Endothelial cell of umbilical vein (primary cell): ENCODE measurements at regions of chr1 and their contacts with region 1.

Region 1: DNA sequence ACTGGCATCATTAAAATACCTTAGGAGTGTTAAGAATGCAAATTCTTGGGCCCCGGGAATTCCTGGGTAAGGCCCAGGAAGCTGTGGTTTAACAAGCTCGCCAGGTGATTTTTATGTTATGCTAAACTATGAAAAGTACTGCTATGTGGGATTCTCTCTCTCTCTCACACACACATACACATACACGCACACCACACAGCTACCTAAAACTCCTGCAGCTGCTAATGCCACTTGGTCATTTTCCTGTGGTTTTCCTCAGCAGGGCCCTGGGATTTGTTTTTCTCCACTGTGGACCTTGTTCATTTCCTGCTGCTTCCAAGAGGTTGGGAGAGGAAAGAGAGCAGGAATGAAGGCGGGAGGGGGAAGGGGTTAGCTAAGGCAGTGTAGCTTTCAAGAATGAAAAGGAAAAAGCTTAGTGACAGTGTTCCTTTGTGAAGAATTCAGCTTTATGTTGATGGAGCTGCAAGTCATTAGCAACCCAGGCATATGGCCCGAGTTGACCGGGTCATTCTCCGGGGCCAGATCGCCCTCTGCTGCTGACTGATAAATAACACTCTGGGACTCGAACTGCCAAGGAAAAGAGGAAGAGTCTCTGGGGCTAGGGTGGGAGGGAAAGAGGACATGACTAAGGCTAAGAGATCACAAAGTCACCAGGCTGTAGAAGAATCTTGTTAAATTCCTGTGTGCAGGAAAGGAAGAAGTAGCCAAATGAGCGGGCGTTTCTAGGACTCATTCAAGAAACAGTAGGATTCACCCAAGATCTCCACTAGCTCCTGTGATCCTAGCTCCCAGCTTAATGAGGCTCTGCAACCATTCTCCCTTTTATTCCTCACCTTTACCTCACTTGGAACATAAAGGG is 30.5 kb upstream of the LRIG2 start:
- DNase-seq: peak; percentile 96
- H3K4me3 ChIP-seq: peak overlapping the region in 1 of 3 experiments; percentile 29
- H3K27ac ChIP-seq: peak overlapping the region; percentile 84
- H3K4me1 ChIP-seq: peaks cover 40% of the 10 kb centered on the region
- H3K27me3 ChIP-seq: no peaks in the 10 kb centered on the region
- CTCF ChIP-seq: peak; percentile 50 to 56
- POLR2A ChIP-seq: no peak

Region 2: GRCh38 chr1:112809253-112809684 is 233.2 kb before region 1 on chr1:
- CTCF ChIA-PET with region 1: interaction called, 23 read pairs
- POLR2A ChIA-PET with region 1: no interaction called
- dilution Hi-C with region 1: no loop called
- intact Hi-C with region 1: loop called (anchors 1 kb)
- DNase-seq: peak; percentile 80
- H3K4me3 ChIP-seq: no peak overlapping the region
- H3K27ac ChIP-seq: no peak overlapping the region
- H3K4me1 ChIP-seq: peaks cover 3% of the 10 kb centered on the region
- H3K27me3 ChIP-seq: no peaks in the 10 kb centered on the region
- CTCF ChIP-seq: peak; percentile 94 to 96
- POLR2A ChIP-seq: no peak

Region 3: DNA sequence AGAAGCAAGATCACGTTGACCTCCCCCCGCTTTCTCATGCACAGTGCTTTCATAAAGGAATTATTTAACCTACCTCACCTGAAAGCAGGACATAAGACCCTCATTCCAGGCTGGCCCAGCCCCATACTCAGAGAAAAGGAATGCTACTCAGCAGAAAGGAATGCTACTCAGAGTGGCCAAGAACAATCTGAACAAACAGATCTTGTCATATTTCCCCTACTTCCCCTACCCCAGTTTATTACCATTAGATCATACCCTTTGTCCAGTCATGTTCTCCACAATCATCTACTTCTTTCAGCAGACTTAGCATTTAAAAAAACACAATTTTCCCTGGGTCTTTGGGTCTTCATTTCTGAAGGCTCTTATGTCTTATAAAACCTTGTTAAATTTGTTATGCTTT is 176.4 kb before region 1 on chr1:
- CTCF ChIA-PET with region 1: interaction called, 3 read pairs
- POLR2A ChIA-PET with region 1: no interaction called
- dilution Hi-C with region 1: no loop called
- intact Hi-C with region 1: loop called (anchors 1 kb)
- DNase-seq: peak; percentile 94
- H3K4me3 ChIP-seq: no peak overlapping the region
- H3K27ac ChIP-seq: peak overlapping the region; percentile 97
- H3K4me1 ChIP-seq: peaks cover 43% of the 10 kb centered on the region
- H3K27me3 ChIP-seq: no peaks in the 10 kb centered on the region
- CTCF ChIP-seq: no peak
- POLR2A ChIP-seq: peak; percentile 76

Region 4: GRCh38 chr1:112905395-112906149 is 136.9 kb before region 1 on chr1:
- CTCF ChIA-PET with region 1: interaction called, 15 read pairs
- POLR2A ChIA-PET with region 1: interaction called, 3 read pairs
- dilution Hi-C with region 1: no loop called
- intact Hi-C with region 1: no loop called
- DNase-seq: peak; percentile 76
- H3K4me3 ChIP-seq: no peak overlapping the region
- H3K27ac ChIP-seq: no peak overlapping the region
- H3K4me1 ChIP-seq: peaks cover 26% of the 10 kb centered on the region
- H3K27me3 ChIP-seq: no peaks in the 10 kb centered on the region
- CTCF ChIP-seq: no peak
- POLR2A ChIP-seq: no peak

Region 5: GRCh38 chr1:113031171-113031933 is 11.2 kb before region 1 on chr1:
- CTCF ChIA-PET with region 1: interaction called, 9 read pairs
- POLR2A ChIA-PET with region 1: interaction called, 6 read pairs
- dilution Hi-C with region 1: no loop called
- intact Hi-C with region 1: loop called (anchors 1 kb)
- DNase-seq: peak; percentile 78
- H3K4me3 ChIP-seq: no peak overlapping the region
- H3K27ac ChIP-seq: peak overlapping the region; percentile 6
- H3K4me1 ChIP-seq: peaks cover 10% of the 10 kb centered on the region
- H3K27me3 ChIP-seq: no peaks in the 10 kb centered on the region
- CTCF ChIP-seq: no peak
- POLR2A ChIP-seq: no peak

Region 6: DNA sequence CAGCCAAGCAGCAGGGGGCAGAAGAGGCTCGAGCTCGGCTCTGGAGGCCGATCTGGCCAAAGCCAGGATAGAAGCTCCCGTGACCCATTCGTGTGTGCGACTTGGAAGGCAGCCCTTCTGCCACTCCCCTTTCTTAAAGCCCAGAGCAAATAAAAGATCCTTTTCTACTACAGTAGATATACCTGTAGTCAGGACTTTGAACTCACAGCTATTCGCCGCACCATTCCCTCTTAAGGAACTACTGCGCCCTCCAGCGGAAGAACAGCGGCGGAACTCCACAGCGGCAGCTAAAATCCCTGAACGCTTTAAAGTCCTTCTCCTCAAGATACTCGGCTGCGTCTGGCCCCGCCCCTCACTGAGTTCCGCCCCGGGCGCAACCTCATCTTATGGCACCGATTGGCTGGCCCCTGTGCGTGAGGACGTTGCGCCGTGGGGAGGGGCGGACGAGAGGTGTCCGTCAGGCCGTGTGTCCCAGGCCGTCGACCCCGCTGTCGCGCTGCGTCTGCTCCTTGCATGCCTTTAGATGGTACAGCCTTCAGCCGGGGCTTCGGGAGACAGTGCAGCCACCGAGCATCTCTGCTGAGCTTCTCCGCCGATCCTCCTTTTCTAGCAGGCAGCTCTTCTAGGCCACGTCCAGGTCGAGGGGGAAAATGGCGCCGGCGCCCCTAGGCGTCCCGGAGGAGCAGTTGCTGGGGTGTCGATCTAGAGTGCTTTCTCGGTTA is 30.4 kb after region 1 on chr1 and contains the start of gene LRIG2:
- CTCF ChIA-PET with region 1: interaction called, 87 read pairs
- POLR2A ChIA-PET with region 1: interaction called, 11 read pairs
- dilution Hi-C with region 1: no loop called
- intact Hi-C with region 1: loop called (anchors 1 kb)
- DNase-seq: peak; percentile 98
- H3K4me3 ChIP-seq: peak within 1 kb of the TSS; percentile 59 to 96 (median 69)
- H3K27ac ChIP-seq: peak within 1 kb of the TSS; percentile 71
- H3K4me1 ChIP-seq: peaks cover 11% of the 10 kb centered on the region
- H3K27me3 ChIP-seq: no peaks in the 10 kb centered on the region
- CTCF ChIP-seq: peak; percentile 73 to 86
- POLR2A ChIP-seq: peak; percentile 96
- total RNA-seq, gene LRIG2: 14.4 and 20.1 TPM in 2 replicates